ENCODE measurements at regions of chr6 and their contacts with region 1.

Region 1: GRCh38 chr6:70221025-70221714 is 81.7 kb downstream of the COL9A1 start:
- DNase-seq: peak; percentile 46

Region 2: GRCh38 chr6:70231311-70231710 is 10.1 kb after region 1 on chr6:
- CTCF ChIA-PET with region 1: interaction called, 22 read pairs
- POLR2A ChIA-PET with region 1: no interaction called
- DNase-seq: no peak

Region 3: DNA sequence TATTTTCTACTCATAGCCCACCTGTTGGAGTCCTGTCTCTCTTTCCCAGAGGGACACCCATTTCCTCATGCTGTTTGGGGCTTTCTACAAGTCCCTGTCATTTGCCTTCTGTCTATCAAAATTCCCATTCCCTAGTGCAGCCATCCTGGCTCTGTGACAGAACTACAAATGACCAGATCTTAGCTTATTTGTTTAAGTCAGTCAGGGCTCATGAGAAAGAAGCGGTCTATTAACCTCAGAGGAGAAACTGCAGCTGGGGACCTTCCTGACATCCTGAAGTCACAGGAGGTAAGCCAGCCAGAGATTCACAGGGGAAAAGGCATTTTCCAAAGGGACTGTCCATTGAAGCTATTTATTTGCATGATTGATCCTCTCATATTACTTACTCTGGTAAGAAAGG is 83.4 kb after region 1 on chr6:
- CTCF ChIA-PET with region 1: interaction called, 17 read pairs
- POLR2A ChIA-PET with region 1: no interaction called
- DNase-seq: no peak

Region 4: DNA sequence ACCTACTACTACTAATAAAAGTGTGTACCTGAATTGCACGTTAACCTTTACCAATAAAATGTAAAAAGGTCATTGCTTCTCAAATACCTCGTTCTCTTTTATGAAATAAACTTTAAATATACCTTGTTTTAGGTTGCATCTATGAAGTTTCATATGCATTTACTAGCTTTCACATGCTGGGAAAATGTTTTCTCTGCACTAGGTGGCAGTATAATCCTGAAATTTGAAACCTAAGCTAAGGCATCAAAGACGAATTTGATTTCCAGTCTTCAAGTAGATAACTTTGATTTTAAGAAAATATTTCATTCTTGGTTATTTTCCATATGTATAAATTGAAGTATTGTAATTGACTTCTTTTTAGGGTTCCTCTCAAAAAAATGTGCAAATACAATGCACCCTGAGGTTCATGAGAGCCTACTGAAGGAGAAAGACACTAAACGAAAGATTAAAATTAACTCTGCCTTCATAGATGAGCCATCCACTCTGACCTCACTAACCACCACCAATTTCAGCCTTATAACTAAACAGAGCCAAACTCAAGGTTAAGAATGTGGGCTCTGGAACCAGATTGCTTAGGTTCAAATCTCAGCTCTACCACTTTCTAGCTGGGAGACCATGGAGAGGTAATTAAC is 89.0 kb after region 1 on chr6:
- CTCF ChIA-PET with region 1: interaction called, 17 read pairs
- POLR2A ChIA-PET with region 1: no interaction called
- DNase-seq: peak; percentile 11

Region 5: GRCh38 chr6:70369332-70369950 is 148.3 kb after region 1 on chr6:
- CTCF ChIA-PET with region 1: interaction called, 19 read pairs
- POLR2A ChIA-PET with region 1: no interaction called
- DNase-seq: peak; percentile 74

Measured in HEK293T (cell line).